ENCODE measurements at regions of chr6 and their contacts with region 1.

Region 1: DNA sequence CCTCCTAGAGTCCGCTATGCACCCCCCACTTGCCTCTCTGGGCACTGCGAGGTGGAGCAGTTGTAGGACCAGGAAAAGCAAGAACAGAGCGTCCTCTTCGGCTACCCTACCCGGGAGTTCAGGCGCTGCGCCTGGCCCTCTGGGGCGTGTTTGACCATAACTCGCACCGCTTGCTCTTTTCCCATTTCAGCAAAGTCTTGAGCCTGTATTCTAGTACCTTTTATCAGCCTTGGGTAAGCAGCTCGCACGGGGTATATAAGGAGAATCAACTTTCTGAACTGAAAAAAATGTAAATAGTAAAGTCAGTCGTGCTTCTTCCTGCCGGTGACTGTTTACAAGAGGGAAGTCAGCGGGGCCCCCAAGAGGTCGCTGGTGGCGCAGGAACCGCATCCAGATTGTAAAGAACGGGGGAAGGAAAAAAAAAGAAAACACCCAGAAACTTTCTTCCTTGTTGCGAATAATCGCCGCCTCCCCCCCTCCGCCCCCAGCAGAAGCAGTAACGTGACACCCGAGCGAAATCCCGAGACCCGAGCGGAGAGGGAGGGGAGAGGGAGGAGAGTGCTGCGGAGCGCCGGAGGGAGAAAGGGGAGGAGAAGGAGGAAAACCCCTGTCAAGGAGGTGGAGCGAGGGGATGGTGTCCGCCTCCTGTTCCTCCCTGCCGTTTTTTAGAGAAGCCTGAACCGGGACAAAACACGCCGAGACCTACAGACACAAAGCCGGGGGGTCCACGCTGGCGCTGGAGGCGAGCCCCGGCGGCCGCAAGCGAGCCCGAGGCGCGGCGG is at the start of gene UST:
- DNase-seq: peak; percentile 96
- H3K4me3 ChIP-seq: peak within 1 kb of the TSS; percentile 70 to 95 (median 84)
- H3K27ac ChIP-seq: peak within 1 kb of the TSS; percentile 83 to 92 (median 90)
- H3K4me1 ChIP-seq: peaks cover 6 to 42% (median 33%) of the 10 kb centered on the region in 4 donors
- H3K27me3 ChIP-seq: no peaks in the 10 kb centered on the region
- CTCF ChIP-seq: peak; percentile 20 to 42 (median 29)
- EP300 ChIP-seq: no peak
- POLR2A ChIP-seq: no peak
- total RNA-seq, gene UST: 29.1 to 46.3 (median 32.4) TPM

Region 2: DNA sequence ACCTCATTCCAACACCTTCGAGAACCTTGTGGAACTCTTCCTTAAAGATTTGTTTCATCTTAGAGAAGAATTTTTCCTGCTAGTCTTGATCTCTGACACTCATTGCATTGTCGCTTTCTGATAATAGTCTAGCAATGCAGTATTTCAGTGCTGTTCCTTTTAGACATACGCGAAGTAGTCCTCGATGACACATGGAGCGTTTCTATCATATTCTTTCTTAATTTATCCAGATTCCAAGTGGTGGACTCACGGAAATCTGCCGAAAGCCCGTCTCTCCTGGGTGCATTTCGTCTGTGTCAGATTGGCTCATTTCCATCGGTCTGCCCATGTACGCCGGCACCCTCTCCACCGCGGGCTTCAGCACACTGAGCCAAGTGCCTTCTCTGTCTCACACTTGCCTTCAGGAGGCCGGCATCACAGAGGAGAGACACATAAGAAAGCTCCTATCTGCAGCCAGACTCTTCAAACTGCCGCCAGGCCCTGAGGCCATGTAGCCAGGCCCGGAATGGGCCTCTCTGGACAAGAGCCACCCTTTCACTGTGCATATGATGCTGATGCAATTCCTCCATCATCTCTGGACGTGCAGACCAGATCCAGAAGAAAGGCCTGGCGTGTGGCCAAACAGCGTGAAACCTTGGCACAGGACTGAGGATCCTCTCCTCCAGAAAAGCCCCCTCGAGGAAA is 198.3 kb before region 1 on chr6:
- intact Hi-C with region 1: no loop called
- DNase-seq: no peak
- H3K4me3 ChIP-seq: no peak overlapping the region
- H3K27ac ChIP-seq: peak overlapping the region in 1 of 4 donors; percentile 4
- H3K4me1 ChIP-seq: peaks cover 0 to 12% (median 5%) of the 10 kb centered on the region in 4 donors
- H3K27me3 ChIP-seq: no peaks in the 10 kb centered on the region
- CTCF ChIP-seq: no peak
- EP300 ChIP-seq: no peak
- POLR2A ChIP-seq: no peak

Region 3: GRCh38 chr6:148578245-148578732 is 168.3 kb before region 1 on chr6:
- intact Hi-C with region 1: loop called (anchors 5 kb)
- DNase-seq: peak; percentile 85
- H3K4me3 ChIP-seq: no peak overlapping the region
- H3K27ac ChIP-seq: peak overlapping the region in 1 of 4 donors; percentile 2
- H3K4me1 ChIP-seq: peaks cover 0 to 13% (median 9%) of the 10 kb centered on the region in 4 donors
- H3K27me3 ChIP-seq: no peaks in the 10 kb centered on the region
- CTCF ChIP-seq: peak; percentile 83 to 89 (median 87)
- EP300 ChIP-seq: no peak
- POLR2A ChIP-seq: no peak

Region 4: GRCh38 chr6:148890096-148890495 is 143.5 kb after region 1 on chr6:
- intact Hi-C with region 1: loop called (anchors 2 kb)
- DNase-seq: peak; percentile 83
- H3K4me3 ChIP-seq: no peak overlapping the region
- H3K27ac ChIP-seq: peak overlapping the region in 1 of 4 donors; percentile 17
- H3K4me1 ChIP-seq: peaks cover 11 to 53% (median 41%) of the 10 kb centered on the region in 4 donors
- H3K27me3 ChIP-seq: no peaks in the 10 kb centered on the region
- CTCF ChIP-seq: no peak
- EP300 ChIP-seq: no peak
- POLR2A ChIP-seq: no peak

Region 5: DNA sequence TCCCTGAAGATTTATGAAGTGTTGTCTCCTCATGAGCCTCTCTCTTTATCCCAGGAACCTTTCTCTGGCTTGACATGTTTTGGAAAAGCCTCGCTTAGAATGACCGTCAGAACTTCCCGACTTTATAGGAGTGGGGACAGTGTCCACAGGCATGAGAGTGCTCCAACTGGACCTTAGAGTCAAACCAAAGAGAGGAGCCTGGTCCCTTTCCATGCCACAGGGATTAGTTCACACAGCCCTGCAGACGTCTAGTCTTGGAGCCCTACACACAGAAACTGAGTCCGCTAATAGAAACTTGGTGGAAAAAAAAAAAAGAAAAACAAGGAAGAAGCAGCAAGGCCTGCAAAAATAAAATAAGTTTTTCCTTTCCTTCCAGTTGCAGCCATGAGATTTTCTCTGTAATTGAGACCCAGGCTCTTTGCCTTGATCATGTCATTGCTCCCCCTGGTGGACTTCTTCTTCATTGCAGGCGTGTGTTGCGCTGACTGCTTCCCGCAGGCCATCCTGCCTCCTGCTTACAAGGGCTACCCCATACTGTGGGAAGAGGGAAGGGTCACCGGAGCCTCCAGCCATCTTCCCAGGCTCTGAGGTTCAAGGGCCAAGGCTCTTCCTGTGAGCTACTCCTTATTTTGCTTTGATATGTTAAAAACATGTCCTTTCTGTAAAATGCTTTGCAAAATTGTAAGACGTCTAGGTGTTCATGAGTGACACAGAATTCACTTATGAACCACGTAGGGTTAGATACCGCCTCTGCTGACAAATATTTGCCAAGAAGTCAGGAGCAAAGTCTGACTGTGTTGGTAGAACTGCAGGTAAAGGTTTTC is 201.3 kb after region 1 on chr6:
- intact Hi-C with region 1: loop called (anchors 2 kb)
- DNase-seq: no peak
- H3K4me3 ChIP-seq: no peak overlapping the region
- H3K27ac ChIP-seq: no peak overlapping the region
- H3K4me1 ChIP-seq: peaks cover 0 to 45% (median 26%) of the 10 kb centered on the region in 4 donors
- H3K27me3 ChIP-seq: no peaks in the 10 kb centered on the region
- CTCF ChIP-seq: peak; percentile 82 to 93 (median 91)
- EP300 ChIP-seq: no peak
- POLR2A ChIP-seq: no peak